Activated naive CD8-positive, alpha-beta T cell treated with anti-CD3 and anti-CD28 coated beads, Interleukin-2, amount 10 ng/mL, durations not matched to agents 7 days and 5 days (primary cell): ENCODE measurements at regions of chr11 and their contacts with region 1.

Region 1: DNA sequence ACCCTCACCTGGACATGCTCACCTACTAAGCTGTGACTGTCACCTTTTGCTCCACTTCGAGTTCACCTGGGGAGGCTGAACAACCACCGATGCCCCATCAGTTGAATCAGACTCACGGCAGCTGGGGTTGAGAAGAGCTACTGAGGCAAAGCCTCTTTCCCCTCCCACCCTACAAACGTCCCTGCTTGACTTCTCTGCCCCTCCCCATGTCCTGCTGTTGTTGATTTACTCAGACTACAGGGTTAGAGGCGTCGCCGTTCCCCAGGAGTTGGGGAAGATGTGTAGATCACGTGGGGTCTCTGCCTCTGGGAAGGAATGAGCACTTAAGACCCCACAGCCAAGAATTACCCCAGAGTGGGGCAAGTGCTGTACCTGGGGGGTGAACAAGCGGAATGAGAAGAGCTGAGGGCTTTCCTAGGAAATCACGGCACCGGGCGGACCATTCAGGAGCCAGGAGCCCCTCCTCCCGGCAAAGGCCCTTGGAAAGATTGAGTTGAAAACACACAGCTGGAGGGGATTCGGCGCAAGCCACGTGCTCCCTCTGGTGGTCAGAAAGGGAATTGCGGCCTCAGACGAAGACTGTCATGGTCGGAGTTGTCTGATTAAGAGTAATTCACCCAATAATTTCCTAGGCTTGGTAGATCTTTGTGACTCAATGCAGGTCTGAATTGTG is 7.0 kb downstream of the FXYD2 start:
- DNase-seq: peak; percentile 88
- ATAC-seq: peak; percentile 27
- H3K4me3 Mint-ChIP-seq: peak overlapping the region; percentile 79
- H3K27ac Mint-ChIP-seq: peak overlapping the region; percentile 98
- H3K4me1 Mint-ChIP-seq: peaks cover 57% of the 10 kb centered on the region
- H3K27me3 Mint-ChIP-seq: no peaks in the 10 kb centered on the region

Region 2: GRCh38 chr11:117743123-117743815 is 74.2 kb before region 1 on chr11:
- POLR2A ChIA-PET with region 1: no interaction called
- DNase-seq: no peak
- ATAC-seq: no peak
- H3K4me3 Mint-ChIP-seq: no peak overlapping the region
- H3K27ac Mint-ChIP-seq: no peak overlapping the region
- H3K4me1 Mint-ChIP-seq: peaks cover 10% of the 10 kb centered on the region
- H3K27me3 Mint-ChIP-seq: peaks cover 11% of the 10 kb centered on the region

Region 3: GRCh38 chr11:117799634-117800033 is 17.9 kb before region 1 on chr11:
- POLR2A ChIA-PET with region 1: no interaction called
- DNase-seq: no peak
- ATAC-seq: no peak
- H3K4me3 Mint-ChIP-seq: no peak overlapping the region
- H3K27ac Mint-ChIP-seq: no peak overlapping the region
- H3K4me1 Mint-ChIP-seq: peaks cover 2% of the 10 kb centered on the region
- H3K27me3 Mint-ChIP-seq: peaks cover 51% of the 10 kb centered on the region

Region 4: GRCh38 chr11:117828611-117829368 is 11.3 kb after region 1 on chr11:
- POLR2A ChIA-PET with region 1: interaction called, 10 read pairs
- DNase-seq: peak; percentile 84
- ATAC-seq: peak; percentile 93
- H3K4me3 Mint-ChIP-seq: peak overlapping the region; percentile 73
- H3K27ac Mint-ChIP-seq: peak overlapping the region; percentile 94
- H3K4me1 Mint-ChIP-seq: peaks cover 58% of the 10 kb centered on the region
- H3K27me3 Mint-ChIP-seq: no peaks in the 10 kb centered on the region